ENCODE measurements at regions of chr5 and their contacts with region 1.

Region 1: DNA sequence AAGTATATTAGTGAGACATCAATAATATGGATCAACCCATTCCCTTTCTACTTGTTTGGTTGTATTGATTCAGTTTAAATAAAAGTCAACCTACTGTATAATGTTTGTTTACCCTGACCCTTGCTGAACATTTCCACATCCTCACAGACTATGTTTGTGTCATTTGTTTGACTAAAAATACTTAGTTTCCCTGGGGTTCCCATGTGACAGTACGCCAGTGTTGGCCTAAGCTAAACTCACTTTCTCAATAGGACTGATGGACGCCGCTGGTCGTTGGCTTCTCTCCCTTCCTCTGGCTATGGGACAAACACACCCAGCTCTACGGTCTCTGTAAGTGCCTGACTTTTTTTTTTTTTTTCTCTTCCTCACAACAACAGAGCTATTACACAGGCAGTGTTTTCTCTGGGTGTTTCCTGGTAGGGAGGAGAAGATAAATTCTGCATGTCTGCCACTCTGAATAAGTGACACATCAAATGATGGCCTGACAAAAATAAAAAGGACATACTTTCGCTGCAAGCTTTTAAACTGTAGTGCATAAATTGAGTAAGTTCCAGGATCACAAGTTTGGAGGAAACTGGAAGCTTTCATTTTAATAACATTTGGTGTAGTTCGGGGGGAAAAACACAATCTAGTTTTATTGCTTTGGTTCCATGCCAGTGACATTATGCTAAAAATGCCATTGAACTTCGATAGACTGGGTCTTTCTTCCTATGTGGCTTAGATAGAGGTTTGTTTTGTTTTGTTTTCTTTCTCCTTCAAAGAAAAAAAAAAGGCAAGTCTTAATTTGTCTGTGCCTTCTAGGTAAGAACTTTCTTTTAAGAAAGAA is 101.0 kb downstream of the CD180 start:
- DNase-seq: peak; percentile 78 to 79
- ATAC-seq: peak; percentile 93
- H3K4me3 ChIP-seq: peak overlapping the region in 1 of 2 donors; percentile 48
- H3K27ac ChIP-seq: peak overlapping the region; percentile 76 to 77
- H3K4me1 ChIP-seq: peaks cover 0 to 1% of the 10 kb centered on the region in 2 donors
- H3K27me3 ChIP-seq: no peaks in the 10 kb centered on the region

Region 2: DNA sequence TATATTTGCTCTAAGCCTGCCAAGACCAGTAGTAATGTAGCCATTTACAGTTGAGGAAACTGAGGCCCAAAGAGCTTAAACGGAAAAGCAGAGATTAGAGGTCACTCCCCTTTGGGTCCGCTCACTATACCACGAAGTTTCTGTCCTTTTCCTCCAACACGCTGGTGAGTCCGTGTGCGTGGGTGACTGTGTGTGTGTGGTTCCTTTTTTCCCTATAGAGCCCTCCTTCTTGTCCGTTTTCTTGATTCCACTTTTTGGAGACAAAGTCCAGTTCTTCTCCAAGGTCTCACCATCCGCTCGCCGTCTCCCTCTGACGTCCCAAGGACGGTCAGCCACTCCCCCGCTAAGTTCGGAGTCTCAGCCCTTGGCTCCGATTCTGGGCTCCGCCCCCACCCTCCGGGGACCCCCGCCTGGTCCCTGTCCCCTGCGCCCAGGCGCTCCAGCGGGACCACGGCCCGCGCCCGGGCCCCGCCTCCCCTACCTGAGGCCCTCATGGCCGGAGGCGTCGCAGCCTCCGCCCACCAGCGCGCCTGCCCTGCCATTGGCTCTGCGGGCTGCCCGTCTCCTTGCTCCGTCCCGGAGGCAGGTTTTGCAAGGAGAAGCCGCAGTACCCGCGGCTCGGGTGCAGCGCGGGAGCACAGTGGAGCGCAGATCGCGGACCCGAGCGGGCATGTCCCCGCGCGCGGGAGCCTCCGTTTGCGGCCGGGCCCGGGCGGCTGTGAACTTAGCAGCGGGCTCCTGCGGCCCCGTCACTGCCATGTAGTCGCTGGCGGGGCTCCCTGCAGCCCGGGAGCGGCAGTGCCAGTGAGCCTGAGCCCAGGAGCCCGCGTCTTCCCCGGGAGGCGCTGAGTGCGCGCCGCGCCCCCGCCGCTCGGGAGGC is 499.6 kb before region 1 on chr5 and contains the start of gene MAST4:
- intact Hi-C with region 1: no loop called
- DNase-seq: peak; percentile 90 to 95
- ATAC-seq: peak; percentile 95
- H3K4me3 ChIP-seq: peak within 1 kb of the TSS; percentile 35 to 42
- H3K27ac ChIP-seq: no peak within 1 kb of the TSS
- H3K4me1 ChIP-seq: no peaks in the 10 kb centered on the region
- H3K27me3 ChIP-seq: no peaks in the 10 kb centered on the region
- total RNA-seq, gene MAST4: 40.8 to 66.5 TPM

Region 3: DNA sequence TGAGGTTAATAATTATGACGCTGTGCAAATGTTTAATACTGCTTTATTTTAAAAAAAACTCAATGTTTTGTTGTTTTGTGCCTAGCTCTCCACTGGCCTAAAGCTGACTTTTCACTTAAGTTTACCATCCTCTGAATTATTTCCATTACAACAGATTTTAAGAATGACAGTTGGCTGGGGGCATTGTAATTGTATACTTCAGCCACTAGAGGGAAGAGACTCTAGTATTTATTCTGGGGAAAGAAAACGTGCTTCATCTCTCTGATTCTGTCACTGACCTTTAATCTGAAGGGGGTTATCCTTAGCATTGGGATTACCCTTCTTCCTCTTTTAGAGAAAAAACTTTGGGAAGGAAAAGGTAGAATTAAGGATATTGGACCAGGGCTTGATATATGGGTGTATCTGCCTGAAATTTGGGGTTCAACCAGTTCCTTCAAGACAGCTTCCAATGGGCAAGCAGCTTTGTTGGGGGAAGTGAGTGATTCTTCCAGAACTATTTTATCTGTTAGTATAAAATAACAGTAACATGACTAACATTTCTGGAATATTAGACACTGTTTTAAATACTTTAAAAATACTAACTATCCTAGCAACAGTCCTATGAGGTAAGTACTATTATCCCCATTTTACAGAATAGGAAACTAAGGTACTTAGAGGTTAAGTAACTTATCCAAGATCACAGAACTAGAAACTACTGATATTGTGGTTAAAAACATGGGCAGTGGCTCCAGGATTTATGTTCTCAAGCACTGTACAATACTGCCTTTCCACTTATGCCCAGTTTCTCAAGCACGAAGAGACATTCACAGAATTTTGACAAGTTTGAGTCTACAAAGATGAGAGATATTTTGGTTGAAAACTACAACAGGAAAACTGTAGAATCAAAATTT is 107.4 kb before region 1 on chr5:
- intact Hi-C with region 1: loop called in 1 of 2 experiments (anchors 5 kb)
- DNase-seq: no peak
- ATAC-seq: no peak
- H3K4me3 ChIP-seq: no peak overlapping the region
- H3K27ac ChIP-seq: no peak overlapping the region
- H3K4me1 ChIP-seq: peaks cover 1 to 3% of the 10 kb centered on the region in 2 donors
- H3K27me3 ChIP-seq: no peaks in the 10 kb centered on the region

Region 4: GRCh38 chr5:67010684-67011409 is 84.7 kb before region 1 on chr5:
- intact Hi-C with region 1: loop called in 1 of 2 experiments (anchors 5 kb)
- DNase-seq: peak; percentile 48 to 76
- ATAC-seq: peak; percentile 40
- H3K4me3 ChIP-seq: no peak overlapping the region
- H3K27ac ChIP-seq: peak overlapping the region in 1 of 2 donors; percentile 39
- H3K4me1 ChIP-seq: peaks cover 4 to 34% of the 10 kb centered on the region in 2 donors
- H3K27me3 ChIP-seq: no peaks in the 10 kb centered on the region

Region 5: DNA sequence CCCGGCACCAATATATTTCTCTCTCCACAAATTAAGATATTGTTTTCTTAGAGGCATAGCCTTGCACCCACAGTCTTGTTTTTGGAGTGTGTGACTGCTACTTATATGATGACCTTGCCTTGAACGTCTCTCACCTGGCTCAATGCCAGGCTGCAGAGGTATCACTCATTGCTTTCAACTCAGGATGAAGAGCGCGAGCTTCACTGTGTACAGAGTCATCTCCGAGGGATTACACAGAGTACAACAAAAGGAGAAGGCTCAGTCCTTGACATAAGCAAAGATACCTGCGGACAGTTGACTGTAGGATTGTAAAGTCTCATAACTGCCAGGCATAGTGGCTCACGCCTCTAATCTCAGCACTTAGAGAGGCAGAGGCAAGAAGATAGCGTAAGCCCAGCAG is 47.3 kb after region 1 on chr5:
- intact Hi-C with region 1: no loop called
- DNase-seq: no peak
- ATAC-seq: no peak
- H3K4me3 ChIP-seq: no peak overlapping the region
- H3K27ac ChIP-seq: no peak overlapping the region
- H3K4me1 ChIP-seq: peaks cover 0 to 2% of the 10 kb centered on the region in 2 donors
- H3K27me3 ChIP-seq: no peaks in the 10 kb centered on the region

Measured in aorta (tissue), 5 donors.